Right ventricle myocardium inferior (tissue), 1 donor: ENCODE measurements at regions of chr17 and their contacts with region 1.

Region 1: DNA sequence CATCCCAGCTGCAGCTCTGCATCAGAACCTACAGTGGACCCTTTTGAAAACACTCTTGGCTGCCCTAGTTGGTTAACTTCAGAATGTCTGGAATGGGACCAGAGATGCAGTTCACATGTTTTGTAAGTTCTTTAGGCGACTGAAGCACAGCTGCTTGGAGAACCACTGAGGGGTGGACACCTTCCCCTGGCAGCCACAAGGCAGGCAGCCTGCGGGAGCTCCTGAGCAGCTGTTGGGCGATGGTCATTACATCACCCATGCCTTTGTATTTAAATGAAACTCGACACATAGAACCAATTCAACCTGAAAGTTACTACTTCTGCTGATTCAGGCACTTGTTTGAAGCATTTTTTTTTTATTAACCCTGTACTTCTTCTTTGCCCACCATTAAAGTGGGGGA is 151.5 kb downstream of the LGALS9B start:
- DNase-seq: no peak
- ATAC-seq: no peak

Region 2: GRCh38 chr17:19992803-19993713 is 322.8 kb before region 1 on chr17:
- intact Hi-C with region 1: loop called (anchors 5 kb)
- DNase-seq: peak; percentile 94
- ATAC-seq: peak; percentile 98

Region 3: GRCh38 chr17:20266806-20267458 is 48.9 kb before region 1 on chr17:
- intact Hi-C with region 1: no loop called
- DNase-seq: no peak
- ATAC-seq: peak; percentile 20

Region 4: DNA sequence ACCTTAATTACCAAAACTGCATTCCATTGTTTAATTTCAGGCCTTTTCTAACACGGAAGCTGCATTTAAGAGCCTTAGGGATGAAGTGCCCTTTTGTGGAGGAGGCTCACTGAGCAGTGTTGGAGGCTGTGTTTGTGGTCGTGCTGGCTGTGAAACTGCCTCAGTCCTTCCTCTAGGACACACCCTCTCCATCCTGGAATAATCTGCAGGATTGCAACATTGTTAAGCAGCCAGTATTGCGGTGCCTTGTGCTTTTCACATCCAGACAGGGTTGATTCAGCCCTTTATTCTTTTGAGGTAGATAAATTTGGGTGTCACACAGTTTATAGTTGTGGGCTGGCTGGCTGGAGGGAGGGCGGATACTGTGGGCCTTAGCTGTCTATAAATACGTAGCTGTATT is 405.4 kb after region 1 on chr17:
- intact Hi-C with region 1: no loop called
- DNase-seq: no peak
- ATAC-seq: no peak